Activated CD8-positive, alpha-beta memory T cell treated with anti-CD3 and anti-CD28 coated beads, Interleukin-2, amount 10 ng/mL, durations not matched to agents 7 days and 5 days (primary cell): ENCODE measurements at regions of chr18 and their contacts with region 1.

Region 1: GRCh38 chr18:2606335-2606734 is 35.0 kb downstream of the NDC80 start:
- DNase-seq: no peak
- ATAC-seq: no peak
- H3K4me3 Mint-ChIP-seq: peak overlapping the region; percentile 58
- H3K27ac Mint-ChIP-seq: peak overlapping the region; percentile 88
- H3K4me1 Mint-ChIP-seq: peaks cover 34% of the 10 kb centered on the region
- H3K27me3 Mint-ChIP-seq: no peaks in the 10 kb centered on the region

Region 2: DNA sequence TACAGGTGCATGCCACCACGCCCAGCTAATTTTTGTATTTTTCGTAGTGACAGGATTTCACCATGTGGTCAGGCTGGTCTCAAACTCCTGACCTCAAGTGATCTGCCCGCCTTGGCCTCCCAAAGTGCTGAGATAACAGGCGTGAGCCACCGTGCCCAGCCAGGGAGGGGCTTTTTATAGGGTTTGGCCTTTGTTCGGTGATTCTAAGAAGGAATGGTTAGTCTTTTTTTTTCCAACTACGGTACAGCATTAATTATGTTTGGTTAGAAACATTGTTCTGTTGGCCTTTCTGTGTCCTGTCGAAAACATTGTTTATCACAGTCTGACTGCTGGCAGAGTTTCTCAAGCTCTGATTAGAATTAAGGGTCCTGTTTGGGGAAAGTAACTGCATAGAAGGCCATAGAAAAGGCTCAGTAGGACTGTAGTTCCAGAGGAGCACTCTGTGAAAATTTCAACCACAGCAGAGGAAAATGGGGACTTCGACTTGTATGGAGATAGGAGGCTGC is 29.8 kb after region 1 on chr18:
- CTCF ChIA-PET with region 1: interaction called, 11 read pairs
- DNase-seq: no peak
- ATAC-seq: no peak
- H3K4me3 Mint-ChIP-seq: peak overlapping the region; percentile 69
- H3K27ac Mint-ChIP-seq: peak overlapping the region; percentile 100
- H3K4me1 Mint-ChIP-seq: peaks cover 62% of the 10 kb centered on the region
- H3K27me3 Mint-ChIP-seq: no peaks in the 10 kb centered on the region

Region 3: DNA sequence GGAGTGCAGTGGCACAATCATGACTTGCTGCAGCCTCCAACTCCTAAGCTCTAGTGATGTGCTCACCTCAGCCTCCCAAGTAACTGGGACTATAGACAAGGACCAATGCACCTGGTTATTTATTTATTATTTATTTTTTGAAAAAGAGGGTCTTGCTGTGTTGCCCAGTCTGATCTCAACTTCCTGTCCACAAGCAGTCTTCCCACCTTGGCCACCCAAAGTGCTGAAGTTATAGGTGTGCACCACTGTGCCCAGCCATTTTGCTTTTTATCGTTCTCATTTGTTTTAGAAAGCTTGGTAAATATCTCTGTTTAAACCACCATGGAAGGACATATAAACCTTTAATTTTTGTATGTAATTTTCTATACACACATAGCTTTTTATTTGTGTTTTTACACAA is 123.4 kb after region 1 on chr18:
- CTCF ChIA-PET with region 1: no interaction called
- DNase-seq: no peak
- ATAC-seq: no peak
- H3K4me3 Mint-ChIP-seq: no peak overlapping the region
- H3K27ac Mint-ChIP-seq: no peak overlapping the region
- H3K4me1 Mint-ChIP-seq: peaks cover 10% of the 10 kb centered on the region
- H3K27me3 Mint-ChIP-seq: no peaks in the 10 kb centered on the region

Region 4: GRCh38 chr18:2906704-2907549 is 300.6 kb after region 1 on chr18:
- CTCF ChIA-PET with region 1: no interaction called
- DNase-seq: peak; percentile 64
- ATAC-seq: peak; percentile 79
- H3K4me3 Mint-ChIP-seq: peak overlapping the region; percentile 82
- H3K27ac Mint-ChIP-seq: peak overlapping the region; percentile 77
- H3K4me1 Mint-ChIP-seq: peaks cover 19% of the 10 kb centered on the region
- H3K27me3 Mint-ChIP-seq: no peaks in the 10 kb centered on the region